ENCODE measurements at regions of chr19 and their contacts with region 1.

Region 1: GRCh38 chr19:58572818-58573657 is at the start of gene MZF1:
- DNase-seq: peak; percentile 100
- H3K4me3 Mint-ChIP-seq: peak within 1 kb of the TSS; percentile 95
- H3K27ac Mint-ChIP-seq: peak within 1 kb of the TSS; percentile 99
- H3K4me1 Mint-ChIP-seq: peaks cover 41% of the 10 kb centered on the region
- H3K27me3 Mint-ChIP-seq: no peaks in the 10 kb centered on the region
- total RNA-seq, gene MZF1: 19.6 and 21.6 TPM in 2 replicates

Region 2: GRCh38 chr19:58466760-58467589 is 106.1 kb before region 1 on chr19 and contains the start of gene ZNF324:
- intact Hi-C with region 1: loop called (anchors 1 kb)
- DNase-seq: peak; percentile 96
- H3K4me3 Mint-ChIP-seq: peak within 1 kb of the TSS; percentile 88
- H3K27ac Mint-ChIP-seq: peak within 1 kb of the TSS; percentile 71
- H3K4me1 Mint-ChIP-seq: peaks cover 17% of the 10 kb centered on the region
- H3K27me3 Mint-ChIP-seq: no peaks in the 10 kb centered on the region
- total RNA-seq, gene ZNF324: 12.8 and 15.5 TPM in 2 replicates

Region 3: DNA sequence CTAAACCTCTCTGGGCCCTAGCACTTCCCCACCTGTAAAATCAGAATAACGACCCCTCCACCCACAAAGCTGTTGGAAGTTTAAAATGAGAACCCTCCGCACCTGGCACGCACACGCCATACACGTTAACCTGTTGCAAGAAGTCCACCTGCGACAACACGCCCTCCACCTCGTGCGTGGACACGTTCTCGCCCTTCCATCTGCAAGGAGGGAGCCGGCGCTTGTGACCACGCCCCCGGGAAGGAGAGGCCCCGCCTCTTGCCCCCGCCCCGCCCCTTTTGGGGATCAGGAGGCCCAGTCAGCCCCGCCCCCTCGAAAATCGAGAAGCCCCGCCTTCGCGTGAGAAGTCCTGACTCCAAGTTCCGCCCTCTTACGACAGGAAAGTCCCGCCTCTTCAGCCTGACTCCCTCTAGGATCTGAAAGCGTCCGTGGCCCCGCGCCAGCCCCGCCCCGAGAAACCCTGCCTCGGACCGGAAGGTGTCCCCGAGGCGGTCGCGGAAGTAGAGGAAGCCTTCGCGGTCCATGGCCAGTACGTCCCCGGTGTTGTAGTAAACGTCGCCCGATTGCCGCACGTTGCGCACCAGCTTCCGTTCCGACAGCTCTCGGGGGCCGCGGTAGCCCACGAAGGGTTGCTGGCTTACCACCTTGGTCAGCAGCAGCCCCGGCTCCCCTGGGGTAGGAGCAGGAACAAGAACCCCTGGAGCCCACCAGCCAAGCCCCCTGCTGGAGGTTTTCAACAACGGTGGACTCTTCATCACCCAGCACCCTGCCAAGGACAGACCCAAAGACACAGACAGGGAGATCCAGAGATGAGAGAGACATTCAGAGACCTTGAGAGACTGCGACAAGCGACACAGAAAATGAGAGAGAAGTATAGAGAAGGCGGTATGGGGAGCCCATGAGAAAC is 73.8 kb before region 1 on chr19:
- intact Hi-C with region 1: loop called (anchors 1 kb)
- DNase-seq: peak; percentile 96
- H3K4me3 Mint-ChIP-seq: peak overlapping the region; percentile 91
- H3K27ac Mint-ChIP-seq: peak overlapping the region; percentile 91
- H3K4me1 Mint-ChIP-seq: peaks cover 21% of the 10 kb centered on the region
- H3K27me3 Mint-ChIP-seq: peaks cover 7% of the 10 kb centered on the region

Region 4: DNA sequence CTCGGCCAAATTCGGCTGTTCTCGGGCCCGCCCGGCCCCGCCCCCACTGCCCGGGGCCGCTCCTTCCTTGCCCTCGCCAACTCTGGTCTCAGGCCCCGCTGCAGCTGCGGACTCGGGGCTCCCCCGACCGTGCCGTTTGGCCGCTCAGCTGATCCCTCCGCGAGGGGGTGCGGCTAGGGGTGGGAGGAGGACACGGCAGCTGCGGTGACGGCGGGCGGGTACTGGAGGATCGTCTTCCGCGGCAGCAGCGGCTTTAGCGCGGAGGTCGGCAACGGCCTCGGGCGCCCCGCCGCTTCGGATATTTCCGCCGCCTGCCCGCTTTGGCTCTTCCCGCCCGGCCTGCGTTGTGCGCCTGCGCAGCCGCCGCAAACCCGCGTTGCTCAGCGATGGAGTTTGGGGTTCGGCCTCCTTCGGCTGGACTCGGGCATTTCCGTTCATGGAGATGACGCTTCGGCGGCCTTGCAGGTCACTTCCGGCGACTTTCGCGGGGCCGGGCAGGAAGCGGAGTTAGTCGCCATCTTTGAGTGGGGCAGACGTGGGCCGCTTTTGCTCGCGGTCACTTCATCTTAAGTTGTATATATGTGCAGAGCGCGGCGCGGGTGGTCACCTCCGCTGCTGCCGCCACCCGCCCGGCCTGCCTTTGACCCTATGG is 14.3 kb before region 1 on chr19:
- intact Hi-C with region 1: loop called (anchors 1 kb)
- DNase-seq: peak; percentile 100
- H3K4me3 Mint-ChIP-seq: peak overlapping the region; percentile 95
- H3K27ac Mint-ChIP-seq: peak overlapping the region; percentile 99
- H3K4me1 Mint-ChIP-seq: peaks cover 66% of the 10 kb centered on the region
- H3K27me3 Mint-ChIP-seq: peaks cover 1% of the 10 kb centered on the region

Measured in activated T-helper 1 cell treated with anti-CD3 and anti-CD28 coated beads, Interleukin-12 subunit alpha, Interleukin-12 subunit beta, Interleukin-2, Interleukin-4 antibody, amounts not matched to agents 30 ng/mL and 10 ng/mL and 1 ng/mL, durations not matched to agents 14 hours and 24 hours and 36 hours (primary cell).